Activated naive CD4-positive, alpha-beta T cell treated with anti-CD3 and anti-CD28 coated beads, Interleukin-2, amount 10 ng/mL, durations not matched to agents 7 days and 5 days (primary cell): ENCODE measurements at regions of chr22 and their contacts with region 1.

Region 1: DNA sequence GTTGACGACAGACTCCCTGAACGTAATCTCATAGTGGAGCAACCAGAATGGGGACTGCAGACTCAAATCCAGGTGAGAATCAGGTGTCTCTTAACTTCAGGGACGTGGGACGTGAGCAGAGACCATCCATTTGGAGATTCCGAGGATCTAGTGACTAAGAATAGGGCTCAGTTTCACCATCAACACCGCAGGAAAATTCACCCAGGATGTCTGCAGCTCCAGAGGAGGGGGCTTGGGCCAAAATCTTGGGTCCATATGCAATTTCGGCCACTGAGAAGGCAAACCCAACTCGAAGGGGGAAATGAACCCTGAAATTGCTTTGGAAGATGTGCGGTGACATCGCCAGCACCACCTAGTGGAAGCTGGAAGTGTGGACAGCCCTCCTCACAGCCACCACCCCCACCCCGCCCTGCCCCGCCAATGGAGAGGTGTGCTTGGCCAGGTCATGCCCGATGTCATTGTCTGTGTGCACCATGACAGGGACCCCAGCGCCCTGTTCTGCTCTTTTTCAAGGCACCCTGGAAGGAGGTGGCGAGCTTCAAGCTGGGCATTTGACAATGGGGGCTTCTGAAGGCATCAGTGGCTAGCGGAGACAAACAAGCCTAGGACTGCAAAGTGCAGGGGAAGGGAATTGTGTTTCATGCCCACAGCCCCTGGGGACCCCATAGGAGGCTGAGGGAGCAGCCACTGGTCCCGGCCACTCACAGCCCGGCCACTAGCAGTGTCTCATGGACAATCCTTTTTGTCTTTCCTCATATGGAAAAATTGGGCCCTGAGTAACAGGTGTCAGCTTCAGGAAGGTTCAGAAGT is 24.8 kb downstream of the APOL1 start:
- DNase-seq: peak; percentile 78
- H3K4me3 Mint-ChIP-seq: peak overlapping the region; percentile 32
- H3K27ac Mint-ChIP-seq: peak overlapping the region; percentile 82
- H3K4me1 Mint-ChIP-seq: peaks cover 39% of the 10 kb centered on the region
- H3K27me3 Mint-ChIP-seq: no peaks in the 10 kb centered on the region

Region 2: DNA sequence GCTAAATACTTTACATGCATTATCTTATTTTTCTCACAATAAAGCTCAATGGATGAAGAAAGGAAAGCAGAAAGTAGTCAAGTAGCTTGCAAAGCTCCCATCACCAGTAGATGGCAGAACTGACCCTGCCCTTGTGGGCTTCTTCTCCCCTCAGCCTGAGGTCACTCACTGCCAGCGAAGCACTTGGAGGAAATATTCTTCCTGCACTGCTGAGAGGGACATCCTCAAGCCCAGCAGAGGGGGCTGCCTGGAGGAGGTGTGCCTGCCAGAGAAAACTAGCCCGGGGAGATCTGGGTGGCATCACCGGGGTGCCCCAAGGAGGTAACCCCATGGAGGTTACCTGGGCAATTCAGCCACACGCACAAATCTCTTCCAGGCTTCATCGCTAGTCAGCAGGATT is 82.7 kb before region 1 on chr22:
- CTCF ChIA-PET with region 1: interaction called, 18 read pairs
- DNase-seq: peak; percentile 66
- H3K4me3 Mint-ChIP-seq: no peak overlapping the region
- H3K27ac Mint-ChIP-seq: no peak overlapping the region
- H3K4me1 Mint-ChIP-seq: peaks cover 31% of the 10 kb centered on the region
- H3K27me3 Mint-ChIP-seq: peaks cover 41% of the 10 kb centered on the region

Region 3: GRCh38 chr22:36239401-36240171 is 38.1 kb before region 1 on chr22 and contains the start of gene APOL2:
- CTCF ChIA-PET with region 1: interaction called, 14 read pairs
- DNase-seq: peak; percentile 94
- H3K4me3 Mint-ChIP-seq: peak within 1 kb of the TSS; percentile 100
- H3K27ac Mint-ChIP-seq: peak within 1 kb of the TSS; percentile 98
- H3K4me1 Mint-ChIP-seq: peaks cover 49% of the 10 kb centered on the region
- H3K27me3 Mint-ChIP-seq: peaks cover 11% of the 10 kb centered on the region

Region 4: GRCh38 chr22:36359181-36359996 is 81.7 kb after region 1 on chr22:
- CTCF ChIA-PET with region 1: no interaction called
- DNase-seq: no peak
- H3K4me3 Mint-ChIP-seq: peak overlapping the region; percentile 38
- H3K27ac Mint-ChIP-seq: peak overlapping the region; percentile 88
- H3K4me1 Mint-ChIP-seq: peaks cover 99% of the 10 kb centered on the region
- H3K27me3 Mint-ChIP-seq: no peaks in the 10 kb centered on the region